PC-9 (cell line): ENCODE measurements at regions of chrX and their contacts with region 1.

Region 1: DNA sequence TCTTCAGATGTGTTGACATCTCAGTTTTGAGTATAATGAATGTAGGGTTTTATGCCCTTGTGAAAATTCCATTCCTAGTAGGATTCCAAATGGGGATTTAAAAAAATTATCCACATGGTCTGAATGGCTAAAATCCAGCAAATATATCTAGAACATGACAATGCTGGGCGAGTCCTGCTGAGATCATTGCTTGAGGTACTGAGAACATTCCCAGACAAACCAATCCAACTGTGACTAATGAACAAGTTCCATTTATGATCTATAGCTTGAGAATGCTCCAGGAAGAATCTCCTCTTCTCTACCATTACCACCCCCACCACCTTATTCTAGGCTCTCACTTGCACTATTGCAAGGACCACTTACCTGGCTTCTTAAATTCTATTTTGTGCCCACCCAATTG is 77.2 kb upstream of the IL1RAPL2 start:
- DNase-seq: no peak
- H3K4me3 ChIP-seq: no peak overlapping the region
- H3K27ac ChIP-seq: no peak overlapping the region
- H3K4me1 ChIP-seq: no peaks in the 10 kb centered on the region
- H3K27me3 ChIP-seq: no peaks in the 10 kb centered on the region
- CTCF ChIP-seq: no peak

Region 2: DNA sequence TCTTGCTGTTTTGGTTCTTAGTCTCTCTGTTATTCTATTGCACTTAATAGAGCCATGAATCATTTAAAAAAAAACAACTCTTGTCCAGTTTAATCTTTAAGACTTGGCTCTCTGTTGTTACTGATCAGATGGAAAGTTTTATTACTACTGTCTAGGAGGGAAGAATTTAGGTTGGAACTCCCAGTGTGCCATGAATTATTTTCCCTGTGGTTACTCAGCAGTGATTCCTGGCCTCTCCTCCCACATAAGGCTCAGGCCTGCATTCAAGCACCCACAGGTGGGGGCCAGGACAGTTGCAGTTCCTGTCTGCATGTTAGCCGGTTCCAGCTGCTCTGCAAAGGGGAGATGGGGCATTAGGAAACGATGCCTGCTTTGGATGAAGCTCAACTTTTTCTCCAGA is 204.3 kb before region 1 on chrX:
- CTCF ChIA-PET with region 1: no interaction called
- POLR2A ChIA-PET with region 1: interaction called, 27 read pairs
- intact Hi-C with region 1: no loop called
- DNase-seq: no peak
- H3K4me3 ChIP-seq: no peak overlapping the region
- H3K27ac ChIP-seq: no peak overlapping the region
- H3K4me1 ChIP-seq: no peaks in the 10 kb centered on the region
- H3K27me3 ChIP-seq: no peaks in the 10 kb centered on the region
- CTCF ChIP-seq: no peak

Region 3: GRCh38 chrX:104565791-104566680 is 77.2 kb after region 1 on chrX and contains the start of gene IL1RAPL2:
- CTCF ChIA-PET with region 1: no interaction called
- POLR2A ChIA-PET with region 1: no interaction called
- intact Hi-C with region 1: no loop called
- DNase-seq: peak; percentile 65 to 74
- H3K4me3 ChIP-seq: peak within 1 kb of the TSS; percentile 77
- H3K27ac ChIP-seq: no peak within 1 kb of the TSS
- H3K4me1 ChIP-seq: no peaks in the 10 kb centered on the region
- H3K27me3 ChIP-seq: no peaks in the 10 kb centered on the region
- CTCF ChIP-seq: peak; percentile 79
- total RNA-seq, gene IL1RAPL2: 0.43 and 1.6 TPM in 2 replicates